SK-N-SH (cell line): ENCODE measurements at regions of chr9 and their contacts with region 1.

Region 1: GRCh38 chr9:68949271-68950000 is 64.5 kb downstream of the PRKACG start:
- DNase-seq: peak; percentile 12
- H3K4me3 ChIP-seq: no peak overlapping the region
- H3K27ac ChIP-seq: no peak overlapping the region
- H3K4me1 ChIP-seq: no peaks in the 10 kb centered on the region
- H3K27me3 ChIP-seq: peaks cover 10% of the 10 kb centered on the region; the same call in 1 of the 2 replicates
- CTCF ChIP-seq: peak; percentile 42
- EP300 ChIP-seq: no peak
- RAD21 ChIP-seq: peak; percentile 46

Region 2: DNA sequence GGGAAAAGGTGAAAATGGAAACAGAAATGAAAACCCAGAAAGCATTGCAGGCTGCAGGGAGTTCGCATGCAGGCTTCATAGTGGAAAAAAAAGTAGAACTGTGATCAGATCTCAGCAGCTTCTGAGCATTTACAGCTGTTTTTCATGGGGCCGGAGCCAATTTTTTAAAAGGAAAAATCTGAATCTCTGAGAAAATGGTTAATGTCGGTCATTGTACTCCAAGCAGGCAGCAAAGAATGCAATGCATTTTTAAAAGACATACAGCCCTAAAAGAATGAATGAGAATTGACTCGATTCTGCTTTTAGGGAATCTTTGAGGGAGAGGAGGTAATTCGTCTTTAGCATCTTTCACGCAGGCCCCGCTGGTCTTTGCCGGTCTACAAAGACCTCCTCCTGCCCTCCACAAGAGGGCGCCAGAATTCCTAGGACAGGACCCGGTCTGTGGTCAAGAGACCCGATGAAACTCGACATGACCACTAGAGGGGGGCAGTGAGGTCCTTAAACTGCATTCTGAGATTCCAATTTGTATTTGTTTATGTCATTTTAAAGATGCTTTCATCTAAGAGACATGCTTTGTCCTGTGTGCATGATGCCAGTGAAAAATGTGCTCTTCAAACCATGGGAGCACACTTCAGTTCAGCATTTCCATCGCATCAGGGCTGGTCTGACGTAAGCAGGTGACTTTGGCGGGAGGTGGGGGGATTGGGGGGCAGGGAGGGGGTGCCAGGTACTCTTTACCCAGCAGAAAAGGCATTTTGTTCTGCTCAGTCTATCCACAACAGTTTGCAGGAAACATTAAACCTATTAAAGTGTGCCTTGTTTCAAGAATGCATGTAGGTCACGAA is 365.0 kb before region 1 on chr9:
- CTCF ChIA-PET with region 1: interaction called, 12 read pairs
- POLR2A ChIA-PET with region 1: no interaction called
- DNase-seq: peak; percentile 80
- H3K4me3 ChIP-seq: peak overlapping the region in 1 of 2 experiments; percentile 50; a peak in 1 of 4 replicates
- H3K27ac ChIP-seq: no peak overlapping the region
- H3K4me1 ChIP-seq: no peaks in the 10 kb centered on the region
- H3K27me3 ChIP-seq: peaks cover 16% of the 10 kb centered on the region; the same call in 1 of the 2 replicates
- CTCF ChIP-seq: peak; percentile 99
- EP300 ChIP-seq: no peak
- RAD21 ChIP-seq: peak; percentile 86

Region 3: GRCh38 chr9:68981789-68982188 is 32.4 kb after region 1 on chr9:
- CTCF ChIA-PET with region 1: no interaction called
- POLR2A ChIA-PET with region 1: no interaction called
- DNase-seq: no peak
- H3K4me3 ChIP-seq: no peak overlapping the region
- H3K27ac ChIP-seq: no peak overlapping the region
- H3K4me1 ChIP-seq: no peaks in the 10 kb centered on the region
- H3K27me3 ChIP-seq: peaks cover 6% of the 10 kb centered on the region; the same call in 1 of the 2 replicates
- CTCF ChIP-seq: no peak
- EP300 ChIP-seq: no peak
- RAD21 ChIP-seq: no peak